Heart left ventricle (tissue), 16 donors: ENCODE measurements at regions of chr5 and their contacts with region 1.

Region 1: GRCh38 chr5:107571621-107572536 is 98.9 kb downstream of the EFNA5 start:
- DNase-seq: peak; percentile 88 to 93 (median 90)
- ATAC-seq: peak; percentile 90 to 95 (median 94)
- H3K4me3 ChIP-seq: peak overlapping the region in 11 of 12 donors; percentile 9 to 60 (median 47)
- H3K27ac ChIP-seq: peak overlapping the region in 11 of 12 donors; percentile 47 to 89 (median 81)
- H3K4me1 ChIP-seq: peaks cover 0 to 50% (median 14%) of the 10 kb centered on the region in 12 donors
- H3K27me3 ChIP-seq: peaks cover 0 to 5% (median 0%) of the 10 kb centered on the region in 9 donors
- CTCF ChIP-seq: peak; percentile 87 to 96 (median 94)
- POLR2A ChIP-seq: peak in 1 of 2 donors; percentile 19

Region 2: DNA sequence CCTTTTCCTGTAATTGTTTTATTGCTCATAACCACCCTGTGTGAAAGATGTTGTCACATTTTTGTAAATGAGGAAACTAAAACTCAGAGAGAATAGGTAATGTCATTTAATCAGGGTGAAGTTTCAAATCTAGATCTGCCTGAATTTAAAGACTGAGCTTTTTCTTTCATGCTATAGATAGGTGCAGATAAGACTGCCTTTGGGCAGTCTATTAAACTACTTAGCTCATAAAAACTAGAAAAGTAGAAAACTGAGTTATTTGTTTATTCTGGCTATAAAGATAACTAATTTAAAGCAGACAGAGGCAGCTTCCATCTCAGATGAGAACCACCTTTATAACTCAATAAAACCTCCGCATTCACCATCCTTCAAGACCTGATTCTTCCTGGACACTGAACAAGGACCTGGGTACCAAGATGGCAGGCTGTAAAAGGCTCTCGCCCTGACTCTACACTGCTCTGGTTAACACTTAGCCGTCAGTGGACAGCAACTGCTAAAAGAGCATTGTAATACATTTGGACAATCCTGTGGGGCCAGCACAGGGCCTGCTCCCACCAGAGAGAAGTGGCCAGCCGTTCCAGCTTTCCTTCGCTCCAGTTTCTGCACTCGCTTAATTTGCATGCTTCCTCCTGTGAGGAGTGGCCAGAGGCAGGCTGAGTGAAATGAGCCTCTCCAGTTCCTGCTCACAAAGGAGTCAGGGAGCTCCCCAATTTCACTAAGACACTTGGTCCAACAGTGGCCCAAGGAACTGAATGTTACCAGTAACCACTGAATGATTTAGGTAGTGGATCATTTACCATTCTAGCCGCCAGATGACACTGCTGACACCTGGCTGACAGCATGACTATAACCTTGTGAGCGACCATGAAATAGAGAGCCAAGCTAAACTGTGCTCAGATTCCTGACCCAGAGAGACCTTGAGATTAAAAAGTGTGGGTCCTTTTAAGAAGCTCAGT is 467.6 kb before region 1 on chr5:
- intact Hi-C with region 1: loop called in 2 of 10 experiments (anchors 10 kb)
- DNase-seq: peak in 3 of 5 donors; percentile 17 to 43 (median 40)
- ATAC-seq: peak; percentile 88 to 97 (median 91)
- H3K4me3 ChIP-seq: no peak overlapping the region
- H3K27ac ChIP-seq: peak overlapping the region in 8 of 12 donors; percentile 3 to 53 (median 36)
- H3K4me1 ChIP-seq: peaks cover 0 to 3% (median 0%) of the 10 kb centered on the region in 12 donors
- H3K27me3 ChIP-seq: no peaks in the 10 kb centered on the region
- CTCF ChIP-seq: peak in 8 of 12 donors; percentile 14 to 54 (median 39)
- POLR2A ChIP-seq: no peak

Region 3: DNA sequence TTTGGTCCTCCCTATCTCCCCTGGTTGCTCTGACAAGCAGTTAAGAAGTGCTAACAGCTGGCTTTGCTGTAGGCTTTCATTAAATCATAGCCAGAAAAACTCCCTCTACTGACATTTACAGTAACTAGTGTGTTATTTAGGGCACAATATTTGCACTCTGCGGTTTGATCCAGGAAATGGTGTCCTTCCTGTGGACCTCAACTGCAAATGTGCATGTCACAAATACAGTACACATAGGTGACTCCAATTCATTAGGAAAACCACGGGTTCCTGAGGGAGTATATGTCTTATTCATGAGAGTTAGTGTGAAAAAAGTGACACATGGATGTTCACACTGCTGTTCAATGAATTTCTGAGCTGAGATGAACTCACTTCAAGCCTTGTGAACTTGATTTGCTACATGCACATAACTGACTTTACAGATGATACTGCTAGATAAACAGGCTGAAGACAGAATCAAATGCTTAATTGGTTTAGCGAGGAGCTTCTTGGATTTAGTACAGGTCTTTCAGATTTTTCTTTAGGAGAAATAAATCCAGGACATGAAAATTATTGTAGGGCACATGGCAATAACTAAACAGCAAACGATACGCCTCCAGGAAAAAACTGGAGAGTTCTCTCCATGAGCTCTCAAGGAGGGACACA is 182.6 kb before region 1 on chr5:
- intact Hi-C with region 1: loop called in 2 of 10 experiments (anchors 10 kb)
- DNase-seq: no peak
- ATAC-seq: peak; percentile 70 to 81 (median 76)
- H3K4me3 ChIP-seq: no peak overlapping the region
- H3K27ac ChIP-seq: peak overlapping the region; percentile 1 to 74 (median 60)
- H3K4me1 ChIP-seq: peaks cover 0 to 34% (median 17%) of the 10 kb centered on the region in 12 donors
- H3K27me3 ChIP-seq: no peaks in the 10 kb centered on the region
- CTCF ChIP-seq: peak in 3 of 12 donors; percentile 13 to 35 (median 25)
- POLR2A ChIP-seq: no peak

Region 4: DNA sequence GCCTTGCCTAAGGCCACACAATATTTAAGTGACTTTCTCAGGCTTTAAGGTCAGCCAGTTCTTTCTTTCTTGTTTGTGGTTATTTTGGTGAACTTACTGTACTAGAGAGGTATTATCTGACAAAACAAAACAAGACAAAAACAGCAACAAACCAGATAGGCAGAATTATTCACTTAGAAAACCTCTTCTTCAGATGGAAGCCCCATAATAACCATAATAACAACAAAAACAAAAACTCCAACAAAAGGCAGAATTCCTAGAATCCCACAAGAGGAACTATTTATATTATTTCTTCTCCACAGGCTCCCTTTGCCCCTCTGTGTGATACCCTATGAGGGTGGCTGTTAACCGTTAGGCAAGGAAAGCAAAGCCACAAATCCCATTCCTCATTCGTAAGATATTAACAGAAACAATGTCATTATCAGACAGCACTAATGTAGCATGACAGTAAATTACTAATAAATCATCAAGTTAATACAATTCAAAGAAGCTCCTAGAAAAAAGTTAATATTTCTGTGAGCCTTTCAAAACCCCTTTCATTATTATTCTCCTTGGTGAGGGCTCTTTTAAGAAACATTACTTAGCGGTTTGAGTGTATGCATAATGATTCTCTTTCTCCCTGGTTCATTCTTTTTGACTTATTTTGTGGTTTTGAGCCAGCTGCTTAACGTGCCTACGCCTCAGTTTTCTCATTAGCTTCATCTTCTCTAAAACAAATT is 176.1 kb before region 1 on chr5:
- intact Hi-C with region 1: loop called in 1 of 10 experiments (anchors 10 kb)
- DNase-seq: no peak
- ATAC-seq: no peak
- H3K4me3 ChIP-seq: no peak overlapping the region
- H3K27ac ChIP-seq: no peak overlapping the region
- H3K4me1 ChIP-seq: peaks cover 0 to 9% (median 0%) of the 10 kb centered on the region in 12 donors
- H3K27me3 ChIP-seq: no peaks in the 10 kb centered on the region
- CTCF ChIP-seq: no peak
- POLR2A ChIP-seq: no peak